ENCODE measurements at regions of chr6 and their contacts with region 1.

Region 1: DNA sequence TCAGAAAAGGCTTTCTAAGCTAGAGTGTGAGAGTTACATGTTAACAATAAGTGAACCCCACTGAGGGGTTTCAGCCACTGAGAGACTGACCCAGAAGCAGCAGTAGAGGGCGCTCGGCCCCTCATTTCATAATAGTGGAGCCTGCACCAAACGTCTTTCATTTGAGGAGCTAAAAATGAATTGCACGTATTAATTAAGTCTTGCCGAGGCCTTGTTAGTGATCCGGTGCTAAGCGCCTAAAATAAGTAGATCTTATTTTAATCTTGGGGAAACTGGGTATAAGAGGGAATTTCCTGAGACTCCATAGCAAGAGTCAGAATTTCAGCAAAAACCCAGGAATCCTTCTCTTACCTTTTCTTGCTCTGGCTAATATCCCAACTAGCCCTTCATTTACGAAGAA is 209.7 kb downstream of the FARS2 start:
- DNase-seq: peak; percentile 67
- H3K4me3 ChIP-seq: no peak overlapping the region
- H3K27ac ChIP-seq: no peak overlapping the region
- H3K4me1 ChIP-seq: peaks cover 7% of the 10 kb centered on the region
- CTCF ChIP-seq: peak; percentile 98

Region 2: DNA sequence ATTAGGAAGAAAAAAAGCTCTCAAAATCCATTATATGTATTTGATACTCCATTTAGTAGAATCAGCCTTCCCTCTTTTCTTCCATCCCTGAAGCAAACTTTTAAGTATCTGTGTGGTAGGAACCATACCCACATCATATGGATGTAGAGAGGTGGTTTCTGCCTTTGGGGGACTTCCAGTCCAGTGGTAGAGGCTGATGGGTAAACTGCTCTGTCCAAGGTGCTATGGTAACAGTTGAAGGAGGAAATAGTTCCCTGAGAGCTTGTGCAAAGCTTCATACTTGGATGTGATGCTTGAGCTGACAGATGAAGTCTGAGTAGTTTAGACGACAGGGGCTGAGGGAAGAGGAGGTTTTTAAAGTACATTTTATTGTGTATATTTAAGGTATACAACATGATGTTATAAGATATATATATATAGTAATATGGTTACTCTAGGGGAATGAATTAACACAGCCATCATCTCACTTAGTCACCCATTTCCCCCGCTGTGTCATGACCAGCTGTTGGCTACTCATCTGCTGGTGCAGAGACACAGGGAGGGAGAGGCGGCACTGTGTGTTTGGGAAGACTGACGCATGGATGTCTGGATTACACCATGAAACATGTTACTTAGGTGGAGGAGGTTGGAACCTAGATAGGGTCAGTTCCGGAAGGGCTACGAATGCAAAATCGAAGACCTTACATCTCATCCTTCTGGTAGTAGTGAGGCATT is 24.5 kb before region 1 on chr6:
- CTCF ChIA-PET with region 1: no interaction called
- POLR2A ChIA-PET with region 1: no interaction called
- intact Hi-C with region 1: no loop called
- DNase-seq: no peak
- H3K4me3 ChIP-seq: no peak overlapping the region
- H3K27ac ChIP-seq: no peak overlapping the region
- H3K4me1 ChIP-seq: no peaks in the 10 kb centered on the region
- CTCF ChIP-seq: no peak

Region 3: DNA sequence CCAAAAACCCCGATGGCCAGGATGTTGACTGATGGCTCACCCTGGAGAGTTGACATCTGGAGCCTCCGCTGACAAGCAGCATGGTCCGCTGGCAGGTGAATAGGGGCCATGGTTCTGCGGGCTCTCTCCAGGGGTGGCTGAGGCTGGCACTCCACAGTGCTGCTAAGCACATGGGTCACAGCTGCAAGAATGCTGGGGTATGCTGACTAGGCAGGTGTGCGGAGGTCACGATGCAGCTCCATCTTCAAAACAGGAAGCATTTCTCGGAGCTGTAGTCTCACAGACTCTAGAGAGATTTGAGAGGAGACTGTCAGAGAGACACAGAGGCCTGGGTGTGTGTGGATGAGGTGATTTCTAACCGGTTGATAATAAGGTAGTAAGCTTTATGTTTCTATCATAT is 194.1 kb after region 1 on chr6:
- CTCF ChIA-PET with region 1: no interaction called
- POLR2A ChIA-PET with region 1: no interaction called
- intact Hi-C with region 1: no loop called
- DNase-seq: peak; percentile 81
- H3K4me3 ChIP-seq: no peak overlapping the region
- H3K27ac ChIP-seq: peak overlapping the region; percentile 19
- H3K4me1 ChIP-seq: peaks cover 20% of the 10 kb centered on the region
- CTCF ChIP-seq: no peak

Region 4: DNA sequence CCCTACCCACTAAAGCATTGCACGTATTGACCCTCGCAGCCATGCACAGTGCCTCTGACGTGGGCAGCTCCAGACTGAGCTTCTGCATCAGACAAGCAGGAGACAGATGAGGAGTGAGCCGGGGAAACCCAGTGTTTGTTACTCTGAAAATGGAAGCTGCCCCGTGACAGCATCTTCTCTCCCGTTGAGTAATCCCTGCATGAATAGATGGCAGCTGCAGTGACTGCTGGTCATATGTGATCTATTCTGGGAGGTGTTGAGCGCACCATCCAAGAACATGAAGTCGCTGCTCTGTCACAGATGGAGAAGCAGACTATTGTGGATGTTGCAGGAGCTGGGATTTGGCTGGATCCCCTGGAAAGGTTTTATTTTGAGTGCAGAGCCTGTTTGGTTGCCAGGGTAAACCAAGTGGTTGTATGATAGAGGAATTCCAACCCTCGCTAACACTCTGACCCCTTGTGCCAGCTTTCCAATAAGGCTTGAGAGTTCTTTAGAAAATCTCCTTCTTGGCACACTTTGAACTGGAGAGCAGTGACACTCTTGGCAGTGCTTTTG is 293.4 kb after region 1 on chr6:
- CTCF ChIA-PET with region 1: no interaction called
- POLR2A ChIA-PET with region 1: no interaction called
- intact Hi-C with region 1: loop called (anchors 1 kb)
- DNase-seq: no peak
- H3K4me3 ChIP-seq: no peak overlapping the region
- H3K27ac ChIP-seq: no peak overlapping the region
- H3K4me1 ChIP-seq: peaks cover 3% of the 10 kb centered on the region
- CTCF ChIP-seq: no peak

Measured in OCI-LY7 (cell line).